Activated naive CD4-positive, alpha-beta T cell treated with anti-CD3 and anti-CD28 coated beads for 36 hours (primary cell): ENCODE measurements at regions of chr10 and their contacts with region 1.

Region 1: DNA sequence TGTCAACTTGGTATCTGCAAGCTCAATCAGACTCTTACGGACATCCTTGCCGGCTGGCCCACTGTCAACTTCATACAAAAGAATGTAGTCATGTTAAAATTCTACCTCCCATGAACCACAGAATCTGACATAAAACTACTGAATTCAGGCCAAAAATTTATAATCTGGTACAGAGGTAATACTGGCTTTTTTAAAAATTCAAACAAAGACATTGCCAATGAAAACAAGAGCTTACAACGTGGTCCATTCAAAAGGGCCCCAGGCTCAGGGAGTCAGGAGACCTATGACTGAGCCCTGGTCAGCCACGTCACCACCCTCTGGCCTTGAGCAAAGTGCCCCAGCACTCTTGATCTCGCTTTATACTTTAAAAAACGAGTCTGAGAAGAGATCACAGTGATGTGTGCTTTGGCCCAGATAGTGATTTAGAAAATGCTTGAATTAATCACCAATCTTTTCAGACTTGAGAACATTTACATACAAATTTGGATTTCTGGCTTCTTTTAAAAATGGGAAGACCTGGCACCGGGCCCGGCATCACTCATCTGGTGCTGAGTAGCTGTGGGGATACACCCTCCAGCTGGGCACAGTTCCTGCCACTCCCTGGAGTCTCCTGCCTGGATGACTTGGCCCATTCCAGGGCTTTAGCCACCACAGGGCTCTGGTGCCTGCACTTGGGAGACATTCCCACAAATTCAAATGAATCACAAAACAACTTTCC is 94.1 kb downstream of the PIP4K2A start:
- DNase-seq: no peak
- H3K4me3 Mint-ChIP-seq: no peak overlapping the region
- H3K27ac Mint-ChIP-seq: no peak overlapping the region
- H3K4me1 Mint-ChIP-seq: peaks cover 91% of the 10 kb centered on the region
- H3K27me3 Mint-ChIP-seq: no peaks in the 10 kb centered on the region

Region 2: GRCh38 chr10:22934726-22935125 is 314.4 kb after region 1 on chr10:
- CTCF ChIA-PET with region 1: interaction called, 12 read pairs
- intact Hi-C with region 1: no loop called
- DNase-seq: no peak
- H3K4me3 Mint-ChIP-seq: no peak overlapping the region
- H3K27ac Mint-ChIP-seq: no peak overlapping the region
- H3K4me1 Mint-ChIP-seq: no peaks in the 10 kb centered on the region
- H3K27me3 Mint-ChIP-seq: no peaks in the 10 kb centered on the region